Activated CD4-positive, alpha-beta memory T cell treated with anti-CD3 and anti-CD28 coated beads for 36 hours (primary cell): ENCODE measurements at regions of chr4 and their contacts with region 1.

Region 1: GRCh38 chr4:103099691-103100392 is at the start of gene BDH2:
- DNase-seq: peak; percentile 47
- H3K4me3 Mint-ChIP-seq: peak within 1 kb of the TSS; percentile 76
- H3K27ac Mint-ChIP-seq: peak within 1 kb of the TSS; percentile 78
- H3K4me1 Mint-ChIP-seq: peaks cover 17% of the 10 kb centered on the region
- H3K27me3 Mint-ChIP-seq: no peaks in the 10 kb centered on the region
- total RNA-seq, gene BDH2: 14.4 to 15.4 TPM

Region 2: DNA sequence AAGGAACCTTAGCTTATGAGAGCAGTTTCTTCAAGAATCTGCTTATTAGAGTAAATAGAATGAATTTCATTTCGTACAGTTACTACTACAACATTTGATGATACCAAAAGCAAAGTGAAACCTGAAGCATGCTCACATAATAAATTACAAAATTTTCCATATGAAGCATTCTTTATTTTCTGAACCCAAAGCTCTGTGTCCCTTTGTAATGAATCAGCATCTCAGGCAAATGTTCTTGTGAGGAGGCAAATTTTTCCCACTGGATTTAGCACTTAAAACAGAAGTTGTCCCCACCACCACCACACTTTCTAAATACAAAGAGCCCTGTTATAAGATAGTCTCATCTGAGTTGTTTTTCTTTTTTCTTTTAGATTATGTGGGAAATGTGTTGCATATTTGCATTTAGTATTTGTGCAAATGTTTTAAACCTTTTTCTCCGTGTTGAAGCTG is 669.4 kb before region 1 on chr4:
- CTCF ChIA-PET with region 1: interaction called, 3 read pairs
- POLR2A ChIA-PET with region 1: no interaction called
- intact Hi-C with region 1: loop called (anchors 1 kb)
- DNase-seq: no peak
- H3K4me3 Mint-ChIP-seq: peak overlapping the region; percentile 82
- H3K27ac Mint-ChIP-seq: peak overlapping the region; percentile 62
- H3K4me1 Mint-ChIP-seq: peaks cover 8% of the 10 kb centered on the region
- H3K27me3 Mint-ChIP-seq: no peaks in the 10 kb centered on the region

Region 3: DNA sequence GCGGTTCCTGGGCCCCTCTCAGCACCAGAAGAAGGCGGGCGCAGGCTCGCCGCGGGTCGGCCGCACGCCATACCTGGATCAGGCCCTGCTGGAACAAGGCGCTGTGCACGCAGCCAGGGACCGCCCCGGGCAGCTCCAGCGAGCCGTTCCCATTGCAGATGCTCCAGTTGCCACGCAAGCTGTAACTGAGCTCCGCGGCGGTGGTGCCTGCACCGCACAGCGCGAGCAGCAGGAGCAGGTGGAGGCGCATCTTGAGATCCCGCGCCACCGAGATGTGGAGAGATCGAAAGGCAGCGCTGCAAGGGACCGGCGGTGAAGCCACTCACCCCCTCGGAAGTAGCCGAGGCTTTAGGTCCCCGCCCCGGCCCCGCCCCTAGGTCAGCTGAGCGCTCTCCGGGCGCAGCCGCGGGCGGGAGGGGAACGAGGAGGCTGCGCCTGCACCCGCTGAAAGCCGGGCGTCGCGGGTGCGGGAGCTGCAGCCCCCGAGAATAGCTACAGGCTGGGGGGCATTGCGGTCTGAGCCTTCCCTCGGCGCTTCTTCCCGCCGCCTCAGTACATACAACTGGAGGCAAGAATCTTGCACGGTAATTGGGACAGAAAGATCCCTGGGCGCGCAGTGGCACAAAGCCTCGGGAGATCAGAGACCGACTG is 339.1 kb before region 1 on chr4 and contains the start of gene MANBA:
- CTCF ChIA-PET with region 1: interaction called, 4 read pairs
- POLR2A ChIA-PET with region 1: no interaction called
- intact Hi-C with region 1: loop called (anchors 10 kb)
- DNase-seq: peak; percentile 91
- H3K4me3 Mint-ChIP-seq: peak within 1 kb of the TSS; percentile 97
- H3K27ac Mint-ChIP-seq: peak within 1 kb of the TSS; percentile 82
- H3K4me1 Mint-ChIP-seq: peaks cover 36% of the 10 kb centered on the region
- H3K27me3 Mint-ChIP-seq: no peaks in the 10 kb centered on the region
- total RNA-seq, gene MANBA: 10.2 to 10.7 TPM

Region 4: DNA sequence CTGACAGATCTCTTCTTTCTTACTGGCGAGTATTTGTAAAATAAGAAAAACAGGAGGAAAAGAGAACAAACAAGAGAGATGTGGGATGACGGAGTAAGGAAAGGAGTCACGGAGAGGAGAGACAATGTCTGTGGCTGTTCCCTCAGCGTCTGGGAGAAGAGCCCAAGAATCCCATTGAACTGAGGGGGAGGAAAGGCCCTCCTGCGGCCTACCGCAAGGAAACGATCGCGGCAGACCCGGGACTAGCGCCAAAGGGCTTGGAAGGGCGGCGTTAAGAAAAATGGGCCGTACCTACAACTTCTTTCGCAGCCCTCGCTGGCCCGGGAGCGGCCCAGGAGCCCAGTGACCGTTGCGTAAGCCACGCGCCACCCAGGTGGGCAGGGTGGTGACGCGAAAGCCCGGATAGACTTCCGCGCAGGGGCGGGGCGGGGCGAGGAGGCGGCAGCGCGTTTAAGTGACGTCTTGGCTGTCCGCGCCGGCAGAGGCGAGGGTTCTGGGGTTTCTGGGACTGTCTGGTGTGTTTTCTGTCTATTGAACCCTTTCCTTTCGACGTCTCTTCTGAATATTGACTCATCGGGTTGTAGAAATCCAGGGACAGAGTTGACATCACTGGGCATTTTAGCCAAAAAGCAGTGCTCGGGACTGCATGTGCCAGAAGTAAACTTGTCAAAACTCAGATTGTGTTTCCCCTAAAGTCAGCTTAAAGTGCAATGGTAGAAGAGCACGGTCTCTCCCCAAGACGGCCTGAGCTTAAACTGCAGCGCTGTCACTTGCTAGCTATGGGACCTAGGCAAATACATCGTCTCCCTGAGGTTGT is 80.3 kb before region 1 on chr4 and contains the start of gene SLC9B1:
- CTCF ChIA-PET with region 1: interaction called, 5 read pairs
- POLR2A ChIA-PET with region 1: no interaction called
- intact Hi-C with region 1: loop called (anchors 1 kb)
- DNase-seq: peak; percentile 97
- H3K4me3 Mint-ChIP-seq: peak within 1 kb of the TSS; percentile 84
- H3K27ac Mint-ChIP-seq: peak within 1 kb of the TSS; percentile 92
- H3K4me1 Mint-ChIP-seq: peaks cover 15% of the 10 kb centered on the region
- H3K27me3 Mint-ChIP-seq: no peaks in the 10 kb centered on the region
- total RNA-seq, gene SLC9B1: 1.9 to 2.4 TPM

Region 5: GRCh38 chr4:103075901-103076739 is 23.7 kb before region 1 on chr4:
- CTCF ChIA-PET with region 1: interaction called, 6 read pairs
- POLR2A ChIA-PET with region 1: interaction called, 9 read pairs
- intact Hi-C with region 1: loop called (anchors 1 kb)
- DNase-seq: peak; percentile 72
- H3K4me3 Mint-ChIP-seq: peak overlapping the region; percentile 79
- H3K27ac Mint-ChIP-seq: peak overlapping the region; percentile 99
- H3K4me1 Mint-ChIP-seq: peaks cover 42% of the 10 kb centered on the region
- H3K27me3 Mint-ChIP-seq: no peaks in the 10 kb centered on the region